Activated T-helper 1 cell treated with anti-CD3 and anti-CD28 coated beads, Interleukin-12 subunit alpha, Interleukin-12 subunit beta, Interleukin-2, Interleukin-4 antibody, amounts not matched to agents 30 ng/mL and 10 ng/mL and 1 ng/mL, durations not matched to agents 14 hours and 24 hours and 36 hours (primary cell): ENCODE measurements at regions of chr4 and their contacts with region 1.

Region 1: GRCh38 chr4:137861682-137862081 is 329.4 kb upstream of the PCDH18 start:
- DNase-seq: no peak
- H3K4me3 Mint-ChIP-seq: no peak overlapping the region
- H3K27ac Mint-ChIP-seq: no peak overlapping the region
- H3K4me1 Mint-ChIP-seq: no peaks in the 10 kb centered on the region
- H3K27me3 Mint-ChIP-seq: no peaks in the 10 kb centered on the region

Region 2: GRCh38 chr4:137124278-137124932 is 737.3 kb before region 1 on chr4:
- intact Hi-C with region 1: loop called (anchors 10 kb)
- DNase-seq: no peak
- H3K4me3 Mint-ChIP-seq: no peak overlapping the region
- H3K27ac Mint-ChIP-seq: no peak overlapping the region
- H3K4me1 Mint-ChIP-seq: no peaks in the 10 kb centered on the region
- H3K27me3 Mint-ChIP-seq: no peaks in the 10 kb centered on the region

Region 3: GRCh38 chr4:137674066-137674465 is 187.6 kb before region 1 on chr4:
- intact Hi-C with region 1: no loop called
- DNase-seq: no peak
- H3K4me3 Mint-ChIP-seq: no peak overlapping the region
- H3K27ac Mint-ChIP-seq: no peak overlapping the region
- H3K4me1 Mint-ChIP-seq: no peaks in the 10 kb centered on the region
- H3K27me3 Mint-ChIP-seq: no peaks in the 10 kb centered on the region

Region 4: GRCh38 chr4:138204507-138204906 is 342.8 kb after region 1 on chr4:
- intact Hi-C with region 1: no loop called
- DNase-seq: no peak
- H3K4me3 Mint-ChIP-seq: no peak overlapping the region
- H3K27ac Mint-ChIP-seq: no peak overlapping the region
- H3K4me1 Mint-ChIP-seq: peaks cover 5% of the 10 kb centered on the region
- H3K27me3 Mint-ChIP-seq: no peaks in the 10 kb centered on the region